Heart left ventricle (tissue), 16 donors: ENCODE measurements at regions of chr1 and their contacts with region 1.

Region 1: GRCh38 chr1:203504397-203505250 is 10.7 kb downstream of the OPTC start:
- DNase-seq: peak; percentile 79 to 89 (median 82)
- ATAC-seq: peak; percentile 25 to 57 (median 48)
- H3K4me3 ChIP-seq: no peak overlapping the region
- H3K27ac ChIP-seq: peak overlapping the region in 2 of 12 donors; percentile 2 to 90
- H3K4me1 ChIP-seq: peaks cover 3 to 43% (median 38%) of the 10 kb centered on the region in 12 donors
- H3K27me3 ChIP-seq: no peaks in the 10 kb centered on the region
- CTCF ChIP-seq: peak; percentile 81 to 90 (median 86)
- POLR2A ChIP-seq: no peak

Region 2: GRCh38 chr1:203558064-203558760 is 53.6 kb after region 1 on chr1:
- intact Hi-C with region 1: loop called in 8 of 10 experiments (anchors 1 to 5 kb)
- DNase-seq: peak in 4 of 5 donors; percentile 56 to 84 (median 73)
- ATAC-seq: peak; percentile 41 to 69 (median 62)
- H3K4me3 ChIP-seq: peak overlapping the region in 4 of 12 donors; percentile 17 to 37 (median 20)
- H3K27ac ChIP-seq: peak overlapping the region; percentile 69 to 98 (median 92)
- H3K4me1 ChIP-seq: peaks cover 0 to 66% (median 39%) of the 10 kb centered on the region in 12 donors
- H3K27me3 ChIP-seq: no peaks in the 10 kb centered on the region
- CTCF ChIP-seq: no peak
- POLR2A ChIP-seq: no peak

Region 3: DNA sequence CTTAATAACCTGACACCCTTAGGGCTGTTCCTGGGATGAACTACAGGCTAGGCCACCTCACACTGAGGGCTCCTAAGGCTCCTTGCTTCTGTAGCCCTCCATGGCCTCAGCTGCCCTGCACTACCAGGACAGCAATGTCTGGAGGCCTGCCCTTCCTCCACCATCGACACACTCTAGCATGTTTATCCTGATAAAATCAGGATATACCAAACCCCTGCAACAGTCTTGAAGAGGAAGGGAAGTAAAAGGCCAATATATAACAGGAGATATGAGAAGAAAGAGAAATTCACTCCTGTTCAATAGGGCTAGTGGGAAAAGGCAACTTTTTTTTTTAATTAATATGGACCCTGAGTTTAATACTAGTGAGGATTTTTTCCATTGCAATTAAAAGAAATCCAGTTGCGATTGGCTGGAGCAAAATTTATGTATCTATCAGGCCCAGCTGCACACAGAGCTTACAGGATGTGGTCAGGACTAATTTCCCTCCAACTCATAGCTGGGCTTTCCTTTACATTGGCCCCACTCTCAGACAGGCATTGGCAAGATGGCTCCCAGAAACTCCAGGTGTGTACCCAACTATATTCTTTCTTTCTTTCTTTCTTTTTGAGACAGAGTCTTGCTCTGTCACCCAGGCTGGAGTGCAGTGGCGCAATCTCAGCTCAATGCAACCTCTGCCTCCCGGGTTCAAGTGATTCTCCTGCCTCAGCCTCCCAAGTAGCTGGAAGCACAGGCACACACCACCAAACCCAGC is 108.5 kb after region 1 on chr1:
- intact Hi-C with region 1: loop called in 4 of 10 experiments (anchors 2 to 5 kb)
- DNase-seq: no peak
- ATAC-seq: no peak
- H3K4me3 ChIP-seq: no peak overlapping the region
- H3K27ac ChIP-seq: no peak overlapping the region
- H3K4me1 ChIP-seq: peaks cover 0 to 24% (median 0%) of the 10 kb centered on the region in 12 donors
- H3K27me3 ChIP-seq: no peaks in the 10 kb centered on the region
- CTCF ChIP-seq: no peak
- POLR2A ChIP-seq: no peak

Region 4: GRCh38 chr1:203682473-203683383 is 178.1 kb after region 1 on chr1:
- intact Hi-C with region 1: no loop called
- DNase-seq: no peak
- ATAC-seq: peak in 2 of 4 donors; percentile 9 to 67
- H3K4me3 ChIP-seq: no peak overlapping the region
- H3K27ac ChIP-seq: peak overlapping the region in 5 of 12 donors; percentile 28 to 87 (median 38)
- H3K4me1 ChIP-seq: peaks cover 0 to 70% (median 35%) of the 10 kb centered on the region in 12 donors
- H3K27me3 ChIP-seq: no peaks in the 10 kb centered on the region
- CTCF ChIP-seq: no peak
- POLR2A ChIP-seq: no peak

Region 5: GRCh38 chr1:203702130-203702577 is 197.5 kb after region 1 on chr1:
- intact Hi-C with region 1: loop called (anchors 1 to 2 kb)
- DNase-seq: peak in 1 of 5 donors; percentile 40
- ATAC-seq: peak; percentile 36 to 68 (median 62)
- H3K4me3 ChIP-seq: no peak overlapping the region
- H3K27ac ChIP-seq: peak overlapping the region in 1 of 12 donors; percentile 89
- H3K4me1 ChIP-seq: peaks cover 0 to 16% (median 8%) of the 10 kb centered on the region in 12 donors
- H3K27me3 ChIP-seq: no peaks in the 10 kb centered on the region
- CTCF ChIP-seq: peak; percentile 59 to 85 (median 78)
- POLR2A ChIP-seq: no peak

Region 6: GRCh38 chr1:203795441-203796235 is 291.0 kb after region 1 on chr1 and contains the starts of genes ZBED6 and ZC3H11A:
- intact Hi-C with region 1: loop called in 1 of 10 experiments (anchors 10 kb)
- DNase-seq: peak; percentile 99 to 100 (median 99)
- ATAC-seq: peak; percentile 98 to 99 (median 98)
- H3K4me3 ChIP-seq: peak within 1 kb of the TSS; percentile 47 to 92 (median 82)
- H3K27ac ChIP-seq: peak within 1 kb of the TSS; percentile 89 to 98 (median 96)
- H3K4me1 ChIP-seq: peaks cover 8 to 52% (median 42%) of the 10 kb centered on the region in 12 donors
- H3K27me3 ChIP-seq: no peaks in the 10 kb centered on the region
- CTCF ChIP-seq: no peak
- POLR2A ChIP-seq: peak in 1 of 2 donors; percentile 63
- total RNA-seq, gene ZBED6: 7.1 to 19.6 (median 11.9) TPM
- total RNA-seq, gene ZC3H11A: 37.4 to 54.2 (median 43.5) TPM